ENCODE measurements at regions of chrX and their contacts with region 1.

Region 1: GRCh38 chrX:37666516-37666915 is 19.1 kb upstream of the XK start:
- DNase-seq: no peak
- ATAC-seq: no peak
- H3K4me3 ChIP-seq: no peak overlapping the region
- H3K27ac ChIP-seq: no peak overlapping the region
- H3K4me1 ChIP-seq: no peaks in the 10 kb centered on the region
- H3K27me3 ChIP-seq: peaks cover 4% of the 10 kb centered on the region
- CTCF ChIP-seq: no peak
- POLR2A ChIP-seq: no peak
- RAD21 ChIP-seq: no peak

Region 2: DNA sequence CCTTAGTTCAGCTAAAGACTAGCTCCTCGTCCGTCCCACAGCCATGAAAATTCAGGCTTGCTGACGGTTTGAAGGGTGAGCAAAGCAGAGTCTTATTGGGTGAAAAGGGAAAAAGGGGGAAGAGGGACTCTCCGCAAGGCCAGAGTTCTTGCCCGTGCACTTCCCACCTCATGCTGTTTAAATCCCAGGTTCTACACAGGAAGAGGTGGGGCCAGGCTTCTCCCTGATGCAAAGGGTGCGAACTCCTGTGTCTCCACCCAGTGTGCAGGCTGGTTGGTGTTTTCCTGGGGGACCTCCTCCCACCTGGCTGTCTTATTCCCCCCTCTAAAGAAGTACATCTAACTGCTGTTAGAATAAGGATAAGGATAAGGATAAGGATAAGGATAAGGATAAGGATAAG is 113.0 kb before region 1 on chrX:
- CTCF ChIA-PET with region 1: no interaction called
- POLR2A ChIA-PET with region 1: no interaction called
- dilution Hi-C with region 1: no loop called
- in situ Hi-C with region 1: no loop called
- intact Hi-C with region 1: no loop called
- DNase-seq: no peak
- ATAC-seq: no peak
- H3K4me3 ChIP-seq: no peak overlapping the region
- H3K27ac ChIP-seq: no peak overlapping the region
- H3K4me1 ChIP-seq: no peaks in the 10 kb centered on the region
- H3K27me3 ChIP-seq: no peaks in the 10 kb centered on the region; the same call in 1 of the 2 replicates
- CTCF ChIP-seq: no peak
- POLR2A ChIP-seq: no peak
- RAD21 ChIP-seq: no peak

Region 3: DNA sequence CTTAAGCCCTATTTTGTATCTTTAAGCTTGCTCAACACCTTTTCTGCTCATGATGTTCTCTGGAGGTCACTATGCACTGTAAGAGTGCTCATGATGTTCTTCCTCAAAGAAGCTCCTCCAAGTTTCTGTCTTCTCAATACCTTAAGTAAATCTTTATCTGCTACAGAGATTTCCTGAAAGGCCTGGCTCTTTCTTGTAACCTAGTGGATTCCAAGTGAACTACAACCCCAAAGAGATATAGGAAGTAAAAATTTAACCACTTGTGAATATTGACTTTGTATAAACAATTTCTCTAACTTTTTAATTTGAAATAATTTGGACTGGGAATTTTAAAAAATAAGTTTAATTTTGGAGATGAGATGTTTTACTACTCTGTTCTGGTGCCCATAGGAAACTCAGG is 20.3 kb before region 1 on chrX:
- CTCF ChIA-PET with region 1: interaction called, 11 read pairs
- POLR2A ChIA-PET with region 1: no interaction called
- dilution Hi-C with region 1: no loop called
- in situ Hi-C with region 1: no loop called
- intact Hi-C with region 1: no loop called
- DNase-seq: no peak
- ATAC-seq: no peak
- H3K4me3 ChIP-seq: no peak overlapping the region
- H3K27ac ChIP-seq: no peak overlapping the region
- H3K4me1 ChIP-seq: no peaks in the 10 kb centered on the region
- H3K27me3 ChIP-seq: peaks cover 1% of the 10 kb centered on the region; the same call in 1 of the 2 replicates
- CTCF ChIP-seq: no peak
- POLR2A ChIP-seq: no peak
- RAD21 ChIP-seq: no peak